Activated CD8-positive, alpha-beta T cell treated with anti-CD3 and anti-CD28 coated beads, Interleukin-2, amount 10 ng/mL, durations not matched to agents 7 days and 5 days (primary cell): ENCODE measurements at regions of chr15 and their contacts with region 1.

Region 1: GRCh38 chr15:43510200-43511011 is 7.0 kb upstream of the MAP1A start:
- DNase-seq: peak; percentile 99
- ATAC-seq: peak; percentile 94
- H3K4me3 Mint-ChIP-seq: peak overlapping the region; percentile 88
- H3K27ac Mint-ChIP-seq: peak overlapping the region; percentile 92
- H3K4me1 Mint-ChIP-seq: peaks cover 52% of the 10 kb centered on the region
- H3K27me3 Mint-ChIP-seq: peaks cover 7% of the 10 kb centered on the region

Region 2: DNA sequence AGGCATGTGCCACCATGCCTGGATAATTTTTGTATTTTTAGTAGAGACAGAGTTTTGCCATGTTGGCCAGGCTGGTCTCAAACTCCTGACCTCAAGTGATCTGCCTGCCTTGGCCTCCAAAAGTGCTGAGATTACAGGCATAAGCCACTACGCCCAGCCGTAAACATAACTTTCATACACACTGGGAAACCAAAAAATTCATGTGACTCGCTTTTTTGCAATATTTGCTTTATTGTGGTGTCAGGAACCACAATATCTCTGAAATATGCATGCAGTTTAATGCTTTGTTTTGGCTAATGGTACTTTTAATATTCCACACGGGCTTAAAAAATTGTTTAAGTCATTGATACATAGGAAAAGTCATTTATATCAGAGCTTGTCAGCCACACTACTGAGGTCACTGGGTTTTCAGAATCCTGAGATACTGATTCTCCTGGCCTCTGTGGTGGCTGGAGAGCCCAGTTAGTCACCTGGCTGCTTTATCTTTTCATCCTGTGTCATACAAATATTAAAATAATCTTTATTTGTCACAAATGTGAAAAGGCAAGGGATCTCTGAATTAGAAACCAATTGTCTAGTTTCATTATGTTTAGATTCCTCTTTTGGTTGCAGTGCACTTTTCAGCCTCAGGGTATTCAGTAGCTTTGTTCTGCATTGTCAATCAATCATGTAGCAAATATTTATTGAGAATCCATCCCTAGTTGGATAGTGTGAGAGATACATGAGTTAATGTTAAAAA is 367.0 kb before region 1 on chr15:
- CTCF ChIA-PET with region 1: no interaction called
- POLR2A ChIA-PET with region 1: no interaction called
- DNase-seq: no peak
- ATAC-seq: no peak
- H3K4me3 Mint-ChIP-seq: no peak overlapping the region
- H3K27ac Mint-ChIP-seq: no peak overlapping the region
- H3K4me1 Mint-ChIP-seq: peaks cover 25% of the 10 kb centered on the region
- H3K27me3 Mint-ChIP-seq: no peaks in the 10 kb centered on the region

Region 3: GRCh38 chr15:43370975-43371974 is 139.1 kb before region 1 on chr15 and contains the starts of genes TUBGCP4 and ZSCAN29:
- CTCF ChIA-PET with region 1: interaction called, 14 read pairs
- POLR2A ChIA-PET with region 1: interaction called, 4 read pairs
- DNase-seq: peak; percentile 84
- ATAC-seq: peak; percentile 89
- H3K4me3 Mint-ChIP-seq: peak within 1 kb of the TSS; percentile 91
- H3K27ac Mint-ChIP-seq: peak within 1 kb of the TSS; percentile 86
- H3K4me1 Mint-ChIP-seq: peaks cover 49% of the 10 kb centered on the region
- H3K27me3 Mint-ChIP-seq: no peaks in the 10 kb centered on the region
- total RNA-seq, gene TUBGCP4: 38.9 to 41.7 TPM
- total RNA-seq, gene ZSCAN29: 30.4 to 32.1 TPM

Region 4: GRCh38 chr15:43390723-43391122 is 119.7 kb before region 1 on chr15:
- CTCF ChIA-PET with region 1: no interaction called
- POLR2A ChIA-PET with region 1: no interaction called
- DNase-seq: no peak
- ATAC-seq: no peak
- H3K4me3 Mint-ChIP-seq: no peak overlapping the region
- H3K27ac Mint-ChIP-seq: peak overlapping the region; percentile 32
- H3K4me1 Mint-ChIP-seq: no peaks in the 10 kb centered on the region
- H3K27me3 Mint-ChIP-seq: no peaks in the 10 kb centered on the region

Region 5: GRCh38 chr15:43440721-43441281 is 69.6 kb before region 1 on chr15:
- CTCF ChIA-PET with region 1: interaction called, 75 read pairs
- POLR2A ChIA-PET with region 1: interaction called, 5 read pairs
- DNase-seq: peak; percentile 64
- ATAC-seq: peak; percentile 89
- H3K4me3 Mint-ChIP-seq: no peak overlapping the region
- H3K27ac Mint-ChIP-seq: peak overlapping the region; percentile 78
- H3K4me1 Mint-ChIP-seq: peaks cover 10% of the 10 kb centered on the region
- H3K27me3 Mint-ChIP-seq: no peaks in the 10 kb centered on the region

Region 6: DNA sequence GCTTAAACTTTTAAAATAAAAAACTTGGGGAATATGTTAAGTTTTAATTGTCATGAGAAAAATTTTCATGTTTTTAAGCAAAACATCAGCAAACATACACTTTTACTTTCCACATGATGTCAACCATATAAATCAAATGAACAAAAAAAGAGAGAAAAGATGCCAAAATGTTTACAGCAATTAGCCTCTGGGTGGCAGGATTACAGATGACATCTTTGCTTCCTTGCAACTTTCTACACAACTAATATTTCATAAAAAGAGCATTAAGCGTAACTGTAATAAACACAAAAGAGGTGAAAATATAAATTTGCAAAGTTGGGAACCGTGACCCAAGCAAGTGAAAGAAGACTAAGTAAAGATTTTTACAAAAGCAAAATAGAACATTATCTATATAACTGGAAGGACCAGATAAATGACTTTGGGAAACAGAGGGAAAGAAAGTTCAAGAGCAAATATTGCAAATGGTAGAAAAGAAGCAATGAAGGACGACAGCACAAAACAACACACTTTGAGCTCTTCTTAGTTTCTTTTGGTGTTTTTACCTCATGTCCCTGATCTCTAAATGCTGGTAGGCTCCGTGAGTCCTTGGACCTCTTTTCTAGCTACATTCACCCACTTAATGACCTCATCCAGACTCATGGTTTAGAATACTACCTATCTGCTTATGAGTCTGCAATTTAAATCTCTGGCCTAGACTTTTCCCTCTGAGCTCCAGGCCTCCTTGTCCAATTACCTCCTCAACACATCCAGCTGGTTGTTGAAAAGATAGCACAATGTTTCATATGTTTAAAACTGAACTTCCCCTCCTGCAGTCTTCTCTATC is 26.9 kb before region 1 on chr15:
- CTCF ChIA-PET with region 1: interaction called, 16 read pairs
- POLR2A ChIA-PET with region 1: no interaction called
- DNase-seq: no peak
- ATAC-seq: no peak
- H3K4me3 Mint-ChIP-seq: no peak overlapping the region
- H3K27ac Mint-ChIP-seq: no peak overlapping the region
- H3K4me1 Mint-ChIP-seq: peaks cover 5% of the 10 kb centered on the region
- H3K27me3 Mint-ChIP-seq: no peaks in the 10 kb centered on the region

Region 7: DNA sequence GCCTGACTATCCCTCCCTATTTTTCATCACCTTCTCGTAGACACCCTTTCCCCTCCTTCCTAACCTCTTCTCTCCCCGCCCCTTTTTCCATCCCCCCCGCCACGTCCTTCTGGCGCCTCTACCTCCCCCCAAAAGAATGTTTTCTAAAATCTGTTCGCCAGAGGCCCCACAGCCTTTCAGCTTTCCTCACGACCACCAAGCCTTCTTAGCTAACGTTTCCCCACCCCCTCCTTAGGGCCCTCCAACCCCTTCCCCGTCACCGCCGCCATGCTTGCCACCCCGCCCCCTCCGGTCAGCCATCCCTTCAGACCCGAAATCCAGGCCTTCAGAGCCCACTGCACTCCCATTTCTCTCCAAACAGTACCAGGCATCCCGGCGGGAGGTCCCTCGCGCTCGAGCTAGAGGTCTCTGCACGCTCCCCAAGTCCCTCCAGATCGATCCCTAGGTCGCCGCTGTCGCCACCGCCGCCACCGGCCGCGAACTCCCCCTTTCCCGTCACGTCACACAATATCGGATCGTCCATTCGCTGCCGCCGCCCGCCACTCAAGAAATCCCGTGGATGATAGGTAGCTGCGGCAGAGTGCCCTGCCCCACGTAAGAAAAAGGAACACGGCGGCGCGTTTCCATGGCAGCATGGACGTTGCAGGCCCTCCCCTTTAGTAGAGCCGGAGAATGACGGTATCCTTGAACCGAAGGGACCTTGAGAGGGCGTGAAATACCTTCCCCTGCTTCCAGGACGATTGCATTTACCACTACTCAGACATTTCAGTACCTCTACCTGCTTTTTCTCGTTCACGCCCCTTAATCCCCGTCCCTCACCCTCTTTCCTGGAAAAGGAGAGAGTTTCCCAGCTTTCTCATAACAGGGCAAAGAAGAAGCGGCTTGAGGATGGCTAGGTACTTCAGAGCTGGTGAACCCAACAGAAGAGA is 17.5 kb before region 1 on chr15 and contains the start of gene TP53BP1:
- CTCF ChIA-PET with region 1: interaction called, 27 read pairs
- POLR2A ChIA-PET with region 1: interaction called, 19 read pairs
- DNase-seq: peak; percentile 98
- ATAC-seq: peak; percentile 99
- H3K4me3 Mint-ChIP-seq: peak within 1 kb of the TSS; percentile 90
- H3K27ac Mint-ChIP-seq: peak within 1 kb of the TSS; percentile 91
- H3K4me1 Mint-ChIP-seq: peaks cover 33% of the 10 kb centered on the region
- H3K27me3 Mint-ChIP-seq: no peaks in the 10 kb centered on the region
- total RNA-seq, gene TP53BP1: 24.3 to 27.3 TPM

Region 8: DNA sequence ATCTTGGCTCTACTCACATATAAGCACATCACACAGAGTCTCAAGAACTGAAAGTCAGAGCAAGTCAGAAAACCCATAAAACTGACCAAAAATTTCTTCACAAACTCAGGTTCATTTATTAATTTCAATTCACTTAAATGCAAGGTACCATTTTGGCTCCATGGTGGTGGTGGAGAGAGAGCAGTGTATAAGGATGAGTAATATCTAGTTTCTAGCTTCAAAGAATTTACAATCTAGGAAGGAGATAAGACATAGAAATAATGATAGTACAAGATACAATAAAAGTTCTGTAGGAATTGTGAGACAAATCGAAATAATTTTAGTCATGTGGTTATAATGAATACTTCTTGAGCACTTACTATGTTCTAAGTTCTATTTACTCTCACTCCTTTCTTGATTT is 10.8 kb before region 1 on chr15:
- CTCF ChIA-PET with region 1: interaction called, 27 read pairs
- POLR2A ChIA-PET with region 1: interaction called, 5 read pairs
- DNase-seq: no peak
- ATAC-seq: no peak
- H3K4me3 Mint-ChIP-seq: no peak overlapping the region
- H3K27ac Mint-ChIP-seq: no peak overlapping the region
- H3K4me1 Mint-ChIP-seq: no peaks in the 10 kb centered on the region
- H3K27me3 Mint-ChIP-seq: no peaks in the 10 kb centered on the region

Region 9: DNA sequence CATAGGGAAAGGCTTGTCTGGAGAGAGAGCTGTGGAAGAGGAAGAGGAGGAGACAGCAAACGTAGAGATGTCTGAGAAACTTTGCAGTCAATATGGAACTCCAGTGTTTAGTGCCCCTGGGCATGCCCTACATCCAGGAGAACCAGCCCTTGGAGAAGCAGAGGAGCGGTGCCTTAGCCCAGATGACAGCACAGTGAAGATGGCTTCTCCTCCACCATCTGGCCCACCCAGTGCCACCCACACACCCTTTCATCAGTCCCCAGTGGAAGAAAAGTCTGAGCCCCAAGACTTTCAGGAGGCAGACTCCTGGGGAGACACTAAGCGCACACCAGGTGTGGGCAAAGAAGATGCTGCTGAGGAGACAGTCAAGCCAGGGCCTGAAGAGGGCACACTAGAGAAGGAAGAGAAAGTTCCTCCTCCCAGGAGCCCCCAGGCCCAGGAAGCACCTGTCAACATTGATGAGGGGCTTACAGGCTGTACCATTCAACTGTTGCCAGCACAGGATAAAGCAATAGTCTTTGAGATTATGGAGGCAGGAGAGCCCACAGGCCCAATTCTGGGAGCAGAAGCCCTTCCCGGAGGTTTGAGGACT is 13.9 kb after region 1 on chr15:
- CTCF ChIA-PET with region 1: interaction called, 10 read pairs
- POLR2A ChIA-PET with region 1: interaction called, 13 read pairs
- DNase-seq: no peak
- ATAC-seq: no peak
- H3K4me3 Mint-ChIP-seq: no peak overlapping the region
- H3K27ac Mint-ChIP-seq: no peak overlapping the region
- H3K4me1 Mint-ChIP-seq: peaks cover 18% of the 10 kb centered on the region
- H3K27me3 Mint-ChIP-seq: peaks cover 5% of the 10 kb centered on the region

Region 10: DNA sequence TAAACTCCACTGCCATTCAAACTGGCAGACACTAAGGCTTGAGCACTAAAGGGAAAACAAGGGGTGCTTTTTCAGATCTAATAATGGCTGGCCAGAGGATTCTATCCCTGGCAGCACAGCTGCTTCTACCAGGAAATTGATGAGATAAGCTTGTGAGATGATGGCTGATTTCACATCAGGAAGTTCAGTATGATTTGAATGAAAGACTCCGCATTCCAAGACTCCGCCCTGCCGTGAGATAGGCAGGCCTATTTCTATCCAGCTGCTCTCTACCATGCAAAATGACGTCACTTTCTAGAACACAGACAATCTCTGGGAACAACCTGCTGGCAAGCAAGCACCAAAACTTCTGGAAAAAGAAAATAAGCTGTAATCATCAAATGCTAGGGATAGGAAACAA is 488.2 kb after region 1 on chr15:
- CTCF ChIA-PET with region 1: no interaction called
- POLR2A ChIA-PET with region 1: no interaction called
- DNase-seq: no peak
- ATAC-seq: no peak
- H3K4me3 Mint-ChIP-seq: no peak overlapping the region
- H3K27ac Mint-ChIP-seq: no peak overlapping the region
- H3K4me1 Mint-ChIP-seq: no peaks in the 10 kb centered on the region
- H3K27me3 Mint-ChIP-seq: peaks cover 16% of the 10 kb centered on the region